Mammary epithelial cell (primary cell): ENCODE measurements at regions of chr4 and their contacts with region 1.

Region 1: GRCh38 chr4:54547299-54548097 is 110.3 kb upstream of the KIT start:
- DNase-seq: no peak
- H3K4me3 ChIP-seq: no peak overlapping the region
- H3K27ac ChIP-seq: no peak overlapping the region
- H3K4me1 ChIP-seq: peaks cover 27% of the 10 kb centered on the region
- H3K27me3 ChIP-seq: no peaks in the 10 kb centered on the region
- CTCF ChIP-seq: no peak

Region 2: GRCh38 chr4:54482529-54483200 is 64.8 kb before region 1 on chr4:
- CTCF ChIA-PET with region 1: no interaction called
- dilution Hi-C with region 1: no loop called
- in situ Hi-C with region 1: no loop called
- intact Hi-C with region 1: loop called (anchors 5 kb)
- DNase-seq: peak; percentile 32
- H3K4me3 ChIP-seq: no peak overlapping the region
- H3K27ac ChIP-seq: no peak overlapping the region
- H3K4me1 ChIP-seq: peaks cover 16% of the 10 kb centered on the region
- H3K27me3 ChIP-seq: no peaks in the 10 kb centered on the region
- CTCF ChIP-seq: no peak

Region 3: DNA sequence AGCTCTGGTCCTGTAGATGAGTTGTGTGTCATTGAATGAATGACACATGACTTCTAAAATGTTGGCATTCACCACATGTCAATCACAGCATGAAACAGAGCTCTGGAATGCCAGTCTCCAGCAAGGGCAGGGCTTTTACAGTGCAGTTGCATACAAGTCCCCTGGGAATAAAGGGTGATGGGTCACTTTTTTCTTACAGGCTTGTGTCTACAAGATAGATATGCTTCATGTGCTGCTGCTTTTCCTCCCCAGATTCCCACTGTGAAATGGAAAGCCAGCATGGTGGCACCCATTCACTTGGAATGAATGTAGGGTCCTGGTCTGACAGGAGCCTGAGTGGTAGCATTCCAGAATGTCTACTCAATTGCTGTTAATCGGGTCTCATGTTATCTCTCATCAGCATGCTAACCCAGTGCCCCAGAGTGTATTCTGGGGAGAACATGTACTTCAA is 48.8 kb before region 1 on chr4:
- CTCF ChIA-PET with region 1: no interaction called
- dilution Hi-C with region 1: no loop called
- in situ Hi-C with region 1: no loop called
- intact Hi-C with region 1: loop called (anchors 5 kb)
- DNase-seq: peak; percentile 71
- H3K4me3 ChIP-seq: no peak overlapping the region
- H3K27ac ChIP-seq: no peak overlapping the region
- H3K4me1 ChIP-seq: peaks cover 13% of the 10 kb centered on the region
- H3K27me3 ChIP-seq: no peaks in the 10 kb centered on the region
- CTCF ChIP-seq: no peak